CD8-positive, alpha-beta T cell (primary cell): ENCODE measurements at regions of chr7 and their contacts with region 1.

Region 1: GRCh38 chr7:87231256-87231655 is 11.7 kb upstream of the TMEM243 start:
- DNase-seq: no peak
- ATAC-seq: no peak
- H3K4me3 ChIP-seq: no peak overlapping the region
- H3K4me3 Mint-ChIP-seq: no peak overlapping the region
- H3K27ac ChIP-seq: no peak overlapping the region
- H3K27ac Mint-ChIP-seq: no peak overlapping the region
- H3K4me1 ChIP-seq: peaks cover 5% of the 10 kb centered on the region
- H3K4me1 Mint-ChIP-seq: peaks cover 5% of the 10 kb centered on the region
- H3K27me3 ChIP-seq: no peaks in the 10 kb centered on the region
- H3K27me3 Mint-ChIP-seq: no peaks in the 10 kb centered on the region
- CTCF ChIP-seq: no peak

Region 2: GRCh38 chr7:86926732-86927131 is 304.5 kb before region 1 on chr7:
- CTCF ChIA-PET with region 1: interaction called, 35 read pairs
- POLR2A ChIA-PET with region 1: no interaction called
- intact Hi-C with region 1: no loop called
- DNase-seq: peak in 4 of 9 experiments; percentile 35 to 67 (median 50)
- ATAC-seq: peak; percentile 85
- H3K4me3 ChIP-seq: no peak overlapping the region
- H3K4me3 Mint-ChIP-seq: no peak overlapping the region
- H3K27ac ChIP-seq: no peak overlapping the region
- H3K27ac Mint-ChIP-seq: no peak overlapping the region
- H3K4me1 ChIP-seq: no peaks in the 10 kb centered on the region
- H3K4me1 Mint-ChIP-seq: no peaks in the 10 kb centered on the region
- H3K27me3 ChIP-seq: no peaks in the 10 kb centered on the region
- H3K27me3 Mint-ChIP-seq: peaks cover 8% of the 10 kb centered on the region
- CTCF ChIP-seq: peak; percentile 91

Region 3: DNA sequence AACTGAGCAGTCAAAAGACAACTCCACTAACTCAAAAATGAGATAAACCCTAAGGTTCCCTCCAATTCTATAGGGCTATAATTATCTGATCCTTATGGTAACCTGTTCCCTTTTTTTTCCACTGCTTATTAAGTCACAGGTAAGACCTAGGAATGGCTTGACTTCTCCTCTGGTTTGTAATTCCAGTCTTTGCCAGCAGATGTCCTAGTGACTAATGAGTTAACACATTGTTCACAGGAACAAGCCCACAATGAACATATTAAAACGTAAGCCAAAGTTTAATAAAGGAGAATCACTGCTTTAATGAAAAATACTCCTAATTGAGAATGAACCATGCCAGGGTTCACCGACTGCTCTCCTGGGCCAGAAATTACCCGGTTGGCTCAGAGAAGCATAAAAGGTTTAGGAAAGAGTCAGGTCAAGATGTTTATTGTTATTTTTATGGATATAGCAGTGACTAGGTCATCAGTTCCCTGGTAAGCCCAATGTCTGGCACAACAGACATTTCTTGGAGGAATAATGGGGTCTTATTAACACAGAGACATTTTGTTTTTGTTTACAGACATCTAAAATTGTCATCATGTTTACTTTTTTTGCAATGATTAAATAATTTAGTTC is 291.9 kb before region 1 on chr7:
- CTCF ChIA-PET with region 1: interaction called, 10 read pairs
- POLR2A ChIA-PET with region 1: no interaction called
- intact Hi-C with region 1: no loop called
- DNase-seq: peak in 5 of 9 experiments; percentile 4 to 67 (median 39)
- ATAC-seq: peak; percentile 63
- H3K4me3 ChIP-seq: no peak overlapping the region
- H3K4me3 Mint-ChIP-seq: no peak overlapping the region
- H3K27ac ChIP-seq: no peak overlapping the region
- H3K27ac Mint-ChIP-seq: no peak overlapping the region
- H3K4me1 ChIP-seq: no peaks in the 10 kb centered on the region
- H3K4me1 Mint-ChIP-seq: no peaks in the 10 kb centered on the region
- H3K27me3 ChIP-seq: no peaks in the 10 kb centered on the region
- H3K27me3 Mint-ChIP-seq: peaks cover 8% of the 10 kb centered on the region
- CTCF ChIP-seq: peak; percentile 41

Region 4: DNA sequence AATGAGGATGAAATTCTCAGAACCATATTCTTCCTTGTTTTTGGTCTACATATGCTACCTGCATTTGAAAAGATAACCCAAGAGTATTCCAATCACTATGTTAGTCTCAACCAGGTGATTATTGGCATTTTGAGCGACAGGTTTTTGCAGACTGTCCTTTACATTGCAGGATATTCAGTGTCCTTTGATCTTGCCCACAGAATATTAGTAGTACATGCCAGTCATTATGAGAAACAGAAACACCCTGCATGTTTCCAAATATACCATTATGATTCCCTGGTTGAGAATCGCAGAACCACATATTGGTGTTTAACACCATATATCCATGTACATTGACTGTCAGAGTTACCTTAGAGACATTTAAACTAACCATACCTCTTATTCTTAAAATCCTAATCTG is 42.3 kb before region 1 on chr7:
- CTCF ChIA-PET with region 1: interaction called, 11 read pairs
- POLR2A ChIA-PET with region 1: no interaction called
- intact Hi-C with region 1: no loop called
- DNase-seq: no peak
- ATAC-seq: no peak
- H3K4me3 ChIP-seq: no peak overlapping the region
- H3K4me3 Mint-ChIP-seq: no peak overlapping the region
- H3K27ac ChIP-seq: no peak overlapping the region
- H3K27ac Mint-ChIP-seq: no peak overlapping the region
- H3K4me1 ChIP-seq: no peaks in the 10 kb centered on the region
- H3K4me1 Mint-ChIP-seq: peaks cover 28% of the 10 kb centered on the region
- H3K27me3 ChIP-seq: no peaks in the 10 kb centered on the region
- H3K27me3 Mint-ChIP-seq: no peaks in the 10 kb centered on the region
- CTCF ChIP-seq: no peak

Region 5: GRCh38 chr7:87213811-87214210 is 17.4 kb before region 1 on chr7:
- CTCF ChIA-PET with region 1: interaction called, 13 read pairs
- POLR2A ChIA-PET with region 1: interaction called, 3 read pairs
- intact Hi-C with region 1: no loop called
- DNase-seq: no peak
- ATAC-seq: no peak
- H3K4me3 ChIP-seq: no peak overlapping the region
- H3K4me3 Mint-ChIP-seq: peak overlapping the region; percentile 81
- H3K27ac ChIP-seq: peak overlapping the region in 1 of 2 experiments; percentile 60
- H3K27ac Mint-ChIP-seq: peak overlapping the region; percentile 95
- H3K4me1 ChIP-seq: peaks cover 87% of the 10 kb centered on the region
- H3K4me1 Mint-ChIP-seq: peaks cover 87% of the 10 kb centered on the region
- H3K27me3 ChIP-seq: no peaks in the 10 kb centered on the region
- H3K27me3 Mint-ChIP-seq: no peaks in the 10 kb centered on the region
- CTCF ChIP-seq: no peak

Region 6: DNA sequence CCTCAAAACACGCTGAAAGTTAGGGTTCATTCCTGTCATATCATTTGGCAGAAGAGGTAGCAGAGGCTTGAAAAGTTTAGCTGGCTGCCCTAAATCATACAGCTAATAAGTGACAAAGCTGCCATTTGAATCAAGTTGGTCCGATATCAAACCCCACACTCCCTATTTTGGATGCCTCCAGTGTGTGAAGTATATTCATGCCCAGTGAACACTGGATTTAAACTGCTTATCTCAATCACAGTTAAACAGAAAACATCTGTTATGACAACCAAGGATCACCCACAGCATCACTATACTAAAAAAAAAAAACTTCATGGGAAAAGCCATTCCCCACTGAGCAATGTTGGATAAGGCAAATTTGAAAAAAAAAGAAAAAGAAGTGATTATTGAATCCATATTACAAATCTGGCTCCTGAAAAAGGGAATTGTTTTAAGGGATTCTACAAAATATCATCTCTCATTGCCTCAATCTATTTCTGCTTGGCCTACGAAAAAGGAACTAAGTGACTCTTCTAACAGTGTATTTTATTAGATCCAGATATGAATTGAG is 321.2 kb after region 1 on chr7:
- CTCF ChIA-PET with region 1: no interaction called
- POLR2A ChIA-PET with region 1: no interaction called
- intact Hi-C with region 1: no loop called
- DNase-seq: no peak
- ATAC-seq: no peak
- H3K4me3 ChIP-seq: no peak overlapping the region
- H3K4me3 Mint-ChIP-seq: no peak overlapping the region
- H3K27ac ChIP-seq: no peak overlapping the region
- H3K27ac Mint-ChIP-seq: no peak overlapping the region
- H3K4me1 ChIP-seq: no peaks in the 10 kb centered on the region
- H3K4me1 Mint-ChIP-seq: no peaks in the 10 kb centered on the region
- H3K27me3 ChIP-seq: no peaks in the 10 kb centered on the region
- H3K27me3 Mint-ChIP-seq: no peaks in the 10 kb centered on the region
- CTCF ChIP-seq: no peak

Region 7: DNA sequence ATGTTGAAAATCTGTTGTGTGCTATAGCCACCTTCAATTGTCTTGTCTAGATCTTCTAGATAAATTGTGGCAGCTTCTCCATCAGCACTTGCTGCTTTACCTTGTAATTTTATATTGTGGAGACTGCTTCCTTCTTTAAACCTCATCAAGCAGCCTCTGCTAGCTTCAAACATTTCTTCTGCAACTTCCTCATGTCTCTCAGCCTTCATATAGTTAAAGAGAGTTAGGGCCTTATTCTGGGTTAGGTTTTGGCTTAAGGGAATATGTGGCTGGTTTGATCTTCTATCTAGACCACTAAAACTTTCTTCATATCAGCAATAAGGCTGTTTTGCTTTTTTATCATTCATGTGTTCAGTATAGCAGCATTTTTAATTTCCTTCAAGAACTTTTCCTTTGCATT is 831.0 kb after region 1 on chr7:
- CTCF ChIA-PET with region 1: no interaction called
- POLR2A ChIA-PET with region 1: no interaction called
- intact Hi-C with region 1: no loop called
- DNase-seq: no peak
- ATAC-seq: no peak
- H3K4me3 ChIP-seq: no peak overlapping the region
- H3K4me3 Mint-ChIP-seq: no peak overlapping the region
- H3K27ac ChIP-seq: no peak overlapping the region
- H3K27ac Mint-ChIP-seq: no peak overlapping the region
- H3K4me1 ChIP-seq: no peaks in the 10 kb centered on the region
- H3K4me1 Mint-ChIP-seq: peaks cover 9% of the 10 kb centered on the region
- H3K27me3 ChIP-seq: no peaks in the 10 kb centered on the region
- H3K27me3 Mint-ChIP-seq: no peaks in the 10 kb centered on the region
- CTCF ChIP-seq: no peak